MCF 10A (cell line): ENCODE measurements at regions of chr12 and their contacts with region 1.

Region 1: GRCh38 chr12:39443081-39443928 is at the start of gene KIF21A:
- DNase-seq: peak; percentile 95
- H3K4me3 Mint-ChIP-seq: peak within 1 kb of the TSS; percentile 82
- H3K27ac Mint-ChIP-seq: peak within 1 kb of the TSS; percentile 78
- H3K4me1 Mint-ChIP-seq: peaks cover 17% of the 10 kb centered on the region
- H3K27me3 Mint-ChIP-seq: no peaks in the 10 kb centered on the region
- CTCF ChIP-seq: peak; percentile 57
- total RNA-seq, gene KIF21A: 44.1 and 53.8 TPM in 2 replicates

Region 2: GRCh38 chr12:38984388-38984787 is 458.9 kb before region 1 on chr12:
- CTCF ChIA-PET with region 1: no interaction called
- POLR2A ChIA-PET with region 1: no interaction called
- intact Hi-C with region 1: no loop called
- DNase-seq: no peak
- H3K4me3 Mint-ChIP-seq: no peak overlapping the region
- H3K27ac Mint-ChIP-seq: no peak overlapping the region
- H3K4me1 Mint-ChIP-seq: no peaks in the 10 kb centered on the region
- H3K27me3 Mint-ChIP-seq: no peaks in the 10 kb centered on the region
- CTCF ChIP-seq: no peak

Region 3: GRCh38 chr12:39319187-39319586 is 124.1 kb before region 1 on chr12:
- CTCF ChIA-PET with region 1: interaction called, 3 read pairs
- POLR2A ChIA-PET with region 1: no interaction called
- intact Hi-C with region 1: loop called (anchors 1 kb)
- DNase-seq: no peak
- H3K4me3 Mint-ChIP-seq: no peak overlapping the region
- H3K27ac Mint-ChIP-seq: no peak overlapping the region
- H3K4me1 Mint-ChIP-seq: no peaks in the 10 kb centered on the region
- H3K27me3 Mint-ChIP-seq: no peaks in the 10 kb centered on the region
- CTCF ChIP-seq: no peak

Region 4: DNA sequence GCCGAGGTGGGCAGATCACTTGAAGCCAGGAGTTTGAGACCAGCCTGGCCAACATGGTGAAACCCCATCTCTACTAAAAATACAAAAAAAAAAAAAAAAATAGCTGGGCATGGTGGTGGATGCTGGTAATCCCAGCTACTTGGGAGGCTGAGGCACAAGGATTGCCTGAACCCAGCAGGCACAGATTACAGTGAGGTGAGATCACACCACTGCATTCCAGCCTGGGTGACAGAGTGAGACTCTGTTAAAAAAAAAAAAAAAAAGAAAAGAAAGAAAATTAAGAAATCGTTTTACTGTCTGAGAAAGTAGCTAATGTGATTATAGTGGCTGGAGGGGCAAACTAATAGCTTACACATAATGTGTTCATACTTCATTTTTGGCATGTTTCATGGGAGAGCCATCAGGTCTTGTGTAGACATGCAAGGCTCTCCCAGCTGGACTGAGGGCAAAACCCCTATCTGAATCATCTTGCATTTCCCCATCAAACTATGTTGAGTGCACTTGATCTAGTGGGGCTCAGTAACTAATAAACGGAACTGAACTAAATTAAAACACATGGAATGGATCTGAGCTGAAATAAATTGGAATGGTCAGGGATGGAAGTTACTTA is 16.6 kb before region 1 on chr12:
- CTCF ChIA-PET with region 1: interaction called, 5 read pairs
- POLR2A ChIA-PET with region 1: interaction called, 34 read pairs
- intact Hi-C with region 1: loop called (anchors 1 kb)
- DNase-seq: peak; percentile 93
- H3K4me3 Mint-ChIP-seq: peak overlapping the region; percentile 34
- H3K27ac Mint-ChIP-seq: peak overlapping the region; percentile 21
- H3K4me1 Mint-ChIP-seq: peaks cover 17% of the 10 kb centered on the region
- H3K27me3 Mint-ChIP-seq: no peaks in the 10 kb centered on the region
- CTCF ChIP-seq: no peak

Region 5: DNA sequence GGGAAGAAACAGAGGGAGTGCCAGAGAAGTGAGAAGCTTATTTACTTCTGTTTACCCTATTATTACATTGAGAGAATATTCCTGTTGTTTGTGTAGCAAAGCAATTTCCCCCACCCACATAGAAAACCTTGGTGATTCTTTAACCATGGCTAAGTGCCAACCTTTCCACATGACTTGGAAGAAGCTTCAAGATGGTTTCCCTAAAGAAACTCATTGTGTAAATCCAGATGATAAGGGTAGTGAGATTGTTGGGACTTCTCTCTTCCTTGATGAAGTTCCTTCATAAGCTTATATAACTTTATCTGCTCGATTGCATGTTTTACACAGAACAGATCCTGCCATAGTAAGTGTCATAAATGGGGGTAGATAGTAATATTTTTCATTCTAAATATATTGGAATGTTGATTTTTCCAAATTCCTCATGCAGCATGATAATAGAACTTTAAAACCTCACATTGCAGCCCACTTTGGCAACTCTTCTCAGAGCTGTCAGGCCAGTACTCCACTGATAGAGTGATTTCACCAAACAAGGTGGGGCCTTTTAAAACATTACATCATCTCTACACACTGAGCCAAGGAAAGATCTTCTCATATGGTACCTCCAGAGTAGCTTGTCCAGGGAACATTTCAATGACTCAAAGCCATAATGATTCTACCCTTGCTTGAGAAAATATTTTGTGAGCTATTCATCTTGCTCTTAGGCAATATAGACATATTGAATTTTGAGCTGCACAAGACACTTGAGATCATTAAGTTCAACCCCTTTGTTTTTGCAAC is 47.4 kb after region 1 on chr12:
- CTCF ChIA-PET with region 1: interaction called, 8 read pairs
- POLR2A ChIA-PET with region 1: interaction called, 46 read pairs
- intact Hi-C with region 1: loop called (anchors 5 kb)
- DNase-seq: peak; percentile 89
- H3K4me3 Mint-ChIP-seq: no peak overlapping the region
- H3K27ac Mint-ChIP-seq: peak overlapping the region; percentile 84
- H3K4me1 Mint-ChIP-seq: peaks cover 13% of the 10 kb centered on the region
- H3K27me3 Mint-ChIP-seq: no peaks in the 10 kb centered on the region
- CTCF ChIP-seq: no peak

Region 6: GRCh38 chr12:39503445-39503844 is 60.1 kb after region 1 on chr12:
- CTCF ChIA-PET with region 1: interaction called, 4 read pairs
- POLR2A ChIA-PET with region 1: interaction called, 5 read pairs
- intact Hi-C with region 1: loop called (anchors 2 kb)
- DNase-seq: peak; percentile 61
- H3K4me3 Mint-ChIP-seq: no peak overlapping the region
- H3K27ac Mint-ChIP-seq: no peak overlapping the region
- H3K4me1 Mint-ChIP-seq: peaks cover 18% of the 10 kb centered on the region
- H3K27me3 Mint-ChIP-seq: no peaks in the 10 kb centered on the region
- CTCF ChIP-seq: peak; percentile 51

Region 7: DNA sequence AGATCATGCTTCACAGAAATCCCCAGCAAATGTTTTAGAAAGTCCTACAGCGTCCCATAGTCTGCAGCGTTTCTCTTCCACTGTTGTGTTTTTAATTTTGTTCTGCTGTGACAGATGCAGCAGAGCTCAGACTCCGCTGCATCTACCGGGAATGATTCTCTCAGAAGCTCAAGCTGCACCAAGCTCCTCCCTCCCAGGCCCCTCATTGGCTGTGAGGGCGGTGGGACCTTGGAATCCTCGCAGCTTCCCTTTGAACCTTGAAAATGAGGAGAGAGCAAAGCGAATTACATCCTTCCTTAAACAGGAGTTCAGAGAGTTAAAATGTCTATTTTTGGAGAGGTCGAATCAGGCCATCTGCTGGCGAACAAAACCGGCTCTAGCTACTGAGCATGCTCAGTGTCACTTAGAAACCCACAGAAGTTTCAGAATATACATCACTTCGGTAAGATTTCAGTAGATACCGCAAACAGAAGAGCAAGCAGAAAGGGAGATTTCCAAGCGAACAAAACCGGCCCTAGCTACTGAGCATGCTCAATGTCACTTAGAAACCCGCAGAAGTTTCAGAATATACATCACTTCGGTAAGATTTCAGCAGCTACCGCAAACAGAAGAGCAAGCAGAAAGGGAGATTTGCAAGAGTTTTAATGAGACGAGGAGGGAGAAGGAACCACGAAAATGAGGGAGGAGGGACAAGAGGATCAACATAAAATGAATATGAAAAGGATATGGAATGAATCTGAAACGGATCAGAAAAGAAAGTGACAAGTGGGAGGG is 176.5 kb after region 1 on chr12 and contains the start of gene ABCD2:
- CTCF ChIA-PET with region 1: interaction called, 5 read pairs
- POLR2A ChIA-PET with region 1: interaction called, 5 read pairs
- intact Hi-C with region 1: loop called (anchors 5 kb)
- DNase-seq: peak; percentile 66
- H3K4me3 Mint-ChIP-seq: no peak within 1 kb of the TSS
- H3K27ac Mint-ChIP-seq: no peak within 1 kb of the TSS
- H3K4me1 Mint-ChIP-seq: no peaks in the 10 kb centered on the region
- H3K27me3 Mint-ChIP-seq: no peaks in the 10 kb centered on the region
- CTCF ChIP-seq: peak; percentile 31
- total RNA-seq, gene ABCD2: 0.20 and 0.42 TPM in 2 replicates